Right ventricle myocardium inferior (tissue), 1 donor: ENCODE measurements at regions of chr15 and their contacts with region 1.

Region 1: DNA sequence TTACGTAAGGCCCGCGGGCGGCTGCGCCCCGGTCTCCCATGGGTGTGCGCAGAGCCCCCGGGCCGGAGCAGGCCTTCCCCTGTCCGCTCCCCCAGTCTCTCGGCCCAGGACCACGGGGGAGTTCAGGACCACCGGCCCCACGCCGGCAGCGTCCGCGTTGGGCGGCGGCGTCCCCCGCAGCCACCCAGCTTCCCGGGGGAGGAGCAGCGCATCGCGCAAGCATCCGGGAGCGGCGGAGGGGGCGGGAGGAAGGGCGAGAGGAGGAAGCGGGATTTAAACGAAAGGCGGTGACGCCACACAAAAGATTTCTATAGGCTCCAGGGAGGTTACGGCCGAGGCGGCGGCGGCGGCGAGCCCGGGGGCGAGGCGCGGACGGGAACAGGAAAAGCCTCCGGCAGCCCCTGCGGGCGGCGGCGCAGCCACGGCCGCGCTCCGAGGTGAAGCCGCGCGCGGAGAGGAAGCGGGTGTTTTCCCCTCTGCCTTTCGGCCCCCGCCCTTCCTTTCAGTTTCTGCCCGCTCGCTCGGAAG is at the start of gene TLNRD1:
- DNase-seq: peak; percentile 95
- ATAC-seq: peak; percentile 81
- total RNA-seq, gene TLNRD1: 7.1 TPM

Region 2: GRCh38 chr15:80953936-80954778 is 46.5 kb before region 1 on chr15:
- intact Hi-C with region 1: no loop called
- DNase-seq: no peak
- ATAC-seq: no peak

Region 3: GRCh38 chr15:81029414-81030300 is 29.0 kb after region 1 on chr15:
- intact Hi-C with region 1: loop called (anchors 2 kb)
- DNase-seq: no peak
- ATAC-seq: peak; percentile 52

Region 4: DNA sequence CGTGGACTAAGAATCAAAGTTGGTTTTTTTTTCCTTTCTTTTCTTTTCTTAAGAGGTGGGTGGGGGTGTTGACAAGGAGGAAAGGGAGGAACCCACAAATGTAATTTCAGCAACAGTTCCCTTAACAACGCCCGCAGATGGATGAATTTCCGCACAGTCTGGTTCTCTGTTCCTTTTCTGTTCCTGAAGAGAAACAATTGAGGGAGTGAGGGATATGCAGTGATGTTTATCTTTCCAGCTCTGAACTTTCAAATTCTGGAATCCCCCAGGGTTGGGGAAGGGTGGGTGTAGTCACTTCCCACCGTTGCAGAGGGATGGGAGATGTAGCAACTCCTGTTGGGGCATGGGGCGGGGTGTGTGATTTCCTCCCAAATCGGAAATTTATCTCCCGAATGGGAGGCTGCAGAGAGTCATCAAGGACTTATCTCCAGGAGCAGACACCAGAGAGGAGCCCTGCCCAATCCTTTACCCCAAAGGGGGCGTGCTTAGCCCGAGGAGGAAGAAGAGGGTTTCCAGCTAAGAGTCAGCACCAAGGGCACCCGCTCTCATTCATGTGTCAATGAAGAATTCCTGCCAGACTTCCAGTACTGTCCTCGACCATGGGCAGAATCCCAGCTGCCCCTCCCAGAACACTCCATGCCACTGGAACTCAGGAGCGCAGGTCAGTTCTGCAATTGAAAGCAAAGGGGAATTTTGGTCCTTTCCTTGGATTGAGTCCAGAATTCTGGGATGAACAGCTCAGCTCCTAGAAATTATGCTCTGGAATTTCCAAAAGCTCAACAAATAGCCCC is 98.4 kb after region 1 on chr15:
- intact Hi-C with region 1: loop called (anchors 1 kb)
- DNase-seq: no peak
- ATAC-seq: peak; percentile 58